Mammary epithelial cell (primary cell): ENCODE measurements at regions of chr7 and their contacts with region 1.

Region 1: GRCh38 chr7:9283246-9283645 is 849.8 kb downstream of the NXPH1 start:
- DNase-seq: no peak
- H3K4me3 ChIP-seq: no peak overlapping the region
- H3K27ac ChIP-seq: no peak overlapping the region
- H3K4me1 ChIP-seq: no peaks in the 10 kb centered on the region
- H3K27me3 ChIP-seq: no peaks in the 10 kb centered on the region
- CTCF ChIP-seq: no peak

Region 2: DNA sequence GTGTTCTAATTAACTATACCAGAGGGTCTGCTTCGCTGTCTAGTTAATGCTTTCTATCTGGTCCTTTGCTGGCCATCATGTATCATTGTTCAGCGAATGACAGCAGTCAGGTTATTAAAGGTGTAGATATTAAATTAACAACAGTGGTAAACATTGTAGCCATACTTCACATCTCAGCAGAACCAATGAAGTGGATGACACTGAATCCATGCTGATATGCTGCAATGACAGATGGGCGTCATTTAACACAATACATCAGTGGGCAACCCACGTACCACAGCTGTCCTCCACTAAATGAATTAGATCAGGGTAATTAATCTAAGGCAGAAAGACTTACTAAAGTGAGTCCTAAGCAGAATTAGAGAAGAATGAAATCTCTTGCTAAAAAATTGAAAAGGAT is 82.6 kb before region 1 on chr7:
- CTCF ChIA-PET with region 1: no interaction called
- dilution Hi-C with region 1: no loop called
- in situ Hi-C with region 1: no loop called
- intact Hi-C with region 1: no loop called
- DNase-seq: no peak
- H3K4me3 ChIP-seq: no peak overlapping the region
- H3K27ac ChIP-seq: no peak overlapping the region
- H3K4me1 ChIP-seq: no peaks in the 10 kb centered on the region
- H3K27me3 ChIP-seq: no peaks in the 10 kb centered on the region
- CTCF ChIP-seq: no peak

Region 3: GRCh38 chr7:9680713-9681112 is 397.5 kb after region 1 on chr7:
- CTCF ChIA-PET with region 1: interaction called, 15 read pairs
- dilution Hi-C with region 1: no loop called
- in situ Hi-C with region 1: no loop called
- intact Hi-C with region 1: no loop called
- DNase-seq: no peak
- H3K4me3 ChIP-seq: no peak overlapping the region
- H3K27ac ChIP-seq: no peak overlapping the region
- H3K4me1 ChIP-seq: no peaks in the 10 kb centered on the region
- H3K27me3 ChIP-seq: no peaks in the 10 kb centered on the region
- CTCF ChIP-seq: no peak